ENCODE measurements at regions of chr15 and their contacts with region 1.

Region 1: GRCh38 chr15:25438601-25439368 is at the start of gene UBE3A:
- DNase-seq: peak; percentile 84
- H3K4me3 Mint-ChIP-seq: peak within 1 kb of the TSS; percentile 92
- H3K27ac Mint-ChIP-seq: peak within 1 kb of the TSS; percentile 90
- H3K4me1 Mint-ChIP-seq: peaks cover 22% of the 10 kb centered on the region
- H3K27me3 Mint-ChIP-seq: no peaks in the 10 kb centered on the region
- total RNA-seq, gene UBE3A: 107 and 108 TPM in 2 replicates

Region 2: DNA sequence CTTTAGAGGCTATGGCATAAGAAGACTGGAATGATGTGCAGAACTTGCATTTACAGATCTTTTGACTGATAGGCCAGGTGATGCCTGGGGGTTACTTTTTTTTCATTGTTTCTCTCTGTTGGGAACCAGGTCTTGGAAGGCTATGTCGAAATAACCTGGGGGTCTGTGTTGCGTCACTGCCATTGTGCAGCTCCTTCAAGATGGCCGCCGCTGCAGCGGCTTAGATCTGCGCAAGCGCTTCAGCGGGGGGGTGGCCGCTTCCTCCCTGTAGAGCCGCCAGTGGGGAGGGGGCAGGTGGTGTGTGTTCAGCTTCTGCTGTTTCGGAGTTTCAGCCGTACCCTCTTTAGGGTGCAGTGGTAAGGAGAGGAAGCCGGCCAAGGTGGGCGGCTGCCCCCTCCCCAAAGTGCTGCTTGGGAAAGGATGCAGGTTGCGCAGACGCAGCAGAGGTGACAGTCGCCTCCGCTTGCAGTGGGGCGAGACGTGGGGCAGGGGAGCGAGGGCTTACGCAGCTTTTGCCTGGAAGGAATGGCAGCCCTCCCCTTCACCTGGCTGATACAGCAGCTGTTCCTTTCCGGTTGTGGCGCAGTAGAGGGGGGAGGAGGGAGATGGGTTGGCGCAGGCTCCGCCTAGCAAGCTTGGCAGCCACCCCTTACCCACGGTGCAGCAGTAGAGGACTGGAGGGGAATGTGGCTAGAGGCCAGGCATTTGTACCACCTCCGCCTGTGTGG is 482.5 kb before region 1 on chr15:
- intact Hi-C with region 1: loop called (anchors 1 kb)
- DNase-seq: peak; percentile 64
- H3K4me3 Mint-ChIP-seq: peak overlapping the region; percentile 88
- H3K27ac Mint-ChIP-seq: peak overlapping the region; percentile 91
- H3K4me1 Mint-ChIP-seq: peaks cover 3% of the 10 kb centered on the region
- H3K27me3 Mint-ChIP-seq: no peaks in the 10 kb centered on the region

Region 3: DNA sequence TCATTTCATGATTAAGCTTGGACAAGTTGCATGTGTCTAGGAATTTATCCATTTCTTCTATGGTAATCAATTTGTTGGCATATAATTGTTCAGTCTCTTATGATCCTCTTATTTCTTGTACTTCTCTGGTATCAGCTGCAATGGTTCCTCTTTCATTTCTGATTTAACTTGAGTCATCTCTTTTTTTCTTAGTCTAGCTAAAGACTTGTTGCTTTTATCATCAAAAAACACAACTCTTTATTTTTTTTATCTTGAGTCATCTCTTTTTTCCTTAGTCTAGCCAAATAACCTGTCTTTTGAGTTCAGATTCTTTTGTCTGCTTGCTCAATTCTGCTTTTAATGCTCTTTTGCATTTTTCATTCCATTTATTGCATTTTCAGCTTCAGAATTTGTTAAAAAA is 37.3 kb before region 1 on chr15:
- intact Hi-C with region 1: loop called (anchors 5 kb)
- DNase-seq: no peak
- H3K4me3 Mint-ChIP-seq: no peak overlapping the region
- H3K27ac Mint-ChIP-seq: no peak overlapping the region
- H3K4me1 Mint-ChIP-seq: peaks cover 8% of the 10 kb centered on the region
- H3K27me3 Mint-ChIP-seq: no peaks in the 10 kb centered on the region

Region 4: GRCh38 chr15:25863111-25863967 is 424.6 kb after region 1 on chr15 and contains the start of gene ATP10A:
- intact Hi-C with region 1: loop called (anchors 5 kb)
- DNase-seq: peak; percentile 64
- H3K4me3 Mint-ChIP-seq: peak within 1 kb of the TSS; percentile 92
- H3K27ac Mint-ChIP-seq: peak within 1 kb of the TSS; percentile 88
- H3K4me1 Mint-ChIP-seq: peaks cover 37% of the 10 kb centered on the region
- H3K27me3 Mint-ChIP-seq: peaks cover 11% of the 10 kb centered on the region
- total RNA-seq, gene ATP10A: 40.1 and 44.4 TPM in 2 replicates